T-cell (primary cell): ENCODE measurements at regions of chr10 and their contacts with region 1.

Region 1: DNA sequence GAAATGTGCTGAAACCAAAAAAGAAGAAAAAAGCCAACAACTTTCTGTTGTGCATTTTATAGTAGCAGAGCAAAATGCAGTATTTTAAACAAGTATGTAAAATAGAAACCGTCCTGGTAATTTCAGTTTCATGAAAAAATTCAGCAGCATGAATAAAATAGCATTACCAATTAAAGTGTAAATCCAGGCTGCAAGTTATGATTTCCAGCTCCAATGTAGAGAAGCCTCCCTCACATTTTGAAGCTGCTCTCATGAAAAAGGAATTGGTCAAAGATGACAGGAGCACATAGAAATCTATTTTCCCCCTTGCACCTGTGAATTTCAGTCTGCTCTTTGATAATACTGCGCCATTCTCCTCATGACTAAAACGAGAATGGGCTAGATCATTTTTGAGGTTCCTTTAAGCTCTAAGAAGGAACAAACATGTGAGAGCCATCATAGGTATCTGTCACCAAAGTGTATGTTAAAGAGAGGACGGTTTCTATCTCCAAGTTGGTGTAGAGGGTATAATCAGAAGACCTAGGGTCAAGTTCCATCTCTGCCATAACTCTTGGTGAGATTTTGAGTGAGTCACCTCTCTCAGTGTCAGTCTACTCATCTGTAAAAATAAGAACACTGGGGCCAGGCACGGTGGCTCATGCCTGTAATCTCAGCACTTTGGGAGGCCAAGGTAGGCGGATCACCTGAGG is 107.5 kb downstream of the MTPAP start:
- DNase-seq: no peak
- ATAC-seq: no peak
- H3K4me3 ChIP-seq: no peak overlapping the region
- H3K4me3 Mint-ChIP-seq: no peak overlapping the region
- H3K27ac ChIP-seq: no peak overlapping the region
- H3K27ac Mint-ChIP-seq: no peak overlapping the region
- H3K4me1 ChIP-seq: peaks cover 0 to 2% of the 10 kb centered on the region in 2 experiments
- H3K4me1 Mint-ChIP-seq: no peaks in the 10 kb centered on the region
- H3K27me3 ChIP-seq: peaks cover 0 to 8% of the 10 kb centered on the region in 2 experiments
- H3K27me3 Mint-ChIP-seq: peaks cover 3 to 4% of the 10 kb centered on the region in 2 donors

Region 2: DNA sequence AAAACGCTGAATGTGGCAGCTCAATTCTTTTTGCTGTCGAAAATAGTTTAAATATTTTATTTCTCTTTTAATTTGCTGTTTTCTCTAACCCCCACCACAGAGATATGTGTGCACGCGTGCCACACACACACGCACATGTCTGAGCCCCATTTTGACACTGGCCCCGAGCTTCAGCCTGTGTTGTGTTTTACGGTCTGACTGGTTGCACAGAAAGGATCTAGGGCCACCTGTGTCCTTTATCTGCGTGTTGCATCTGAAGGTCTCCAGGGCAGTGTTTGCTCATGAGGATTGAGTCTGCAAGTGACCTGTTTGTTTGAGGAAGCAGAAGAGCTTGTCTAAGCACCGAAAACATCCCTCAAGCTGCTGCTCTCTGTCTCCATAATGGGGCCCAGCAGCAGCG is 1219.1 kb before region 1 on chr10:
- CTCF ChIA-PET with region 1: interaction called in 1 of 2 experiments, 15 read pairs
- POLR2A ChIA-PET with region 1: no interaction called
- DNase-seq: no peak
- ATAC-seq: no peak
- H3K4me3 ChIP-seq: no peak overlapping the region
- H3K4me3 Mint-ChIP-seq: no peak overlapping the region
- H3K27ac ChIP-seq: no peak overlapping the region
- H3K27ac Mint-ChIP-seq: no peak overlapping the region
- H3K4me1 ChIP-seq: no peaks in the 10 kb centered on the region
- H3K4me1 Mint-ChIP-seq: no peaks in the 10 kb centered on the region
- H3K27me3 ChIP-seq: no peaks in the 10 kb centered on the region
- H3K27me3 Mint-ChIP-seq: peaks cover 0 to 11% of the 10 kb centered on the region in 2 donors

Region 3: DNA sequence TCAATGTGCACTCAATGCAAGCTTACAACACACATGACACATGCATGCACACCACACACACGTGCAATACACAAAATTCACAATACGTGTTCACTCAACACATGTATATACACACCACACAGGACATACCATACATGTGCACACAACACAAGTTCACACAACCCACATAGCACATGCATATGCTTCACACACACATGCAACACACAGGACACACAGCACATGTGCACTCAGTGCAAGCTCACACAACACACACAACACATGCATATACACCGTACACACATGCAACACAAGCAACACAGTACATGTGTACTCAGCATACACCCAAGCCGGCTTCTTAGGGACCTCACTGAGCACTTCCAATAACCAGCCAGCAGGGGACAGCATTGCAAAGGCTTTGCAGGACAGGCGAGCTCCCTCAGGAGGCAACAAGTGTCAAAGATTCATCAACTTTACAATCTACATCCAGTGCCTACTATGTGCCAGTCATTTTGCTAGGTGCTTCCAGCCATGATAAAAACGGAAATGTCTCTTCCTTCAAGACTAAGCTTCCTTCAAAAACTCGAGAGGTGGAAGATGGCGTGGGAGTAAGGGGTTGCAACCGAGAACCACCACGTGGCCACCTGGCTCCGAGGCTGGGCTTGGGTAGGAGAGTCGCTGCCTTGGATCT is 243.3 kb before region 1 on chr10:
- CTCF ChIA-PET with region 1: interaction called, 12 to 27 read pairs
- POLR2A ChIA-PET with region 1: no interaction called
- DNase-seq: peak; percentile 43 to 88 (median 69)
- ATAC-seq: peak; percentile 64 to 84 (median 80)
- H3K4me3 ChIP-seq: no peak overlapping the region
- H3K4me3 Mint-ChIP-seq: no peak overlapping the region
- H3K27ac ChIP-seq: no peak overlapping the region
- H3K27ac Mint-ChIP-seq: no peak overlapping the region
- H3K4me1 ChIP-seq: peaks cover 0 to 7% of the 10 kb centered on the region in 2 experiments
- H3K4me1 Mint-ChIP-seq: peaks cover 7 to 13% (median 12%) of the 10 kb centered on the region in 3 donors
- H3K27me3 ChIP-seq: peaks cover 0 to 47% of the 10 kb centered on the region in 2 experiments
- H3K27me3 Mint-ChIP-seq: peaks cover 48 to 63% of the 10 kb centered on the region in 2 donors